Dorsolateral prefrontal cortex (tissue), 120 donors: ENCODE measurements at regions of chr19 and their contacts with region 1.

Region 1: GRCh38 chr19:38729653-38730469 is 14.4 kb downstream of the CAPN12 start:
- DNase-seq: peak in 4 of 10 donors; percentile 45 to 66 (median 56)
- H3K4me3 ChIP-seq: no peak overlapping the region
- H3K27ac ChIP-seq: peak overlapping the region in 48 of 59 donors; percentile 9 to 81 (median 59)
- H3K27me3 ChIP-seq: no peaks in the 10 kb centered on the region
- CTCF ChIP-seq: peak; percentile 20 to 80 (median 69)

Region 2: DNA sequence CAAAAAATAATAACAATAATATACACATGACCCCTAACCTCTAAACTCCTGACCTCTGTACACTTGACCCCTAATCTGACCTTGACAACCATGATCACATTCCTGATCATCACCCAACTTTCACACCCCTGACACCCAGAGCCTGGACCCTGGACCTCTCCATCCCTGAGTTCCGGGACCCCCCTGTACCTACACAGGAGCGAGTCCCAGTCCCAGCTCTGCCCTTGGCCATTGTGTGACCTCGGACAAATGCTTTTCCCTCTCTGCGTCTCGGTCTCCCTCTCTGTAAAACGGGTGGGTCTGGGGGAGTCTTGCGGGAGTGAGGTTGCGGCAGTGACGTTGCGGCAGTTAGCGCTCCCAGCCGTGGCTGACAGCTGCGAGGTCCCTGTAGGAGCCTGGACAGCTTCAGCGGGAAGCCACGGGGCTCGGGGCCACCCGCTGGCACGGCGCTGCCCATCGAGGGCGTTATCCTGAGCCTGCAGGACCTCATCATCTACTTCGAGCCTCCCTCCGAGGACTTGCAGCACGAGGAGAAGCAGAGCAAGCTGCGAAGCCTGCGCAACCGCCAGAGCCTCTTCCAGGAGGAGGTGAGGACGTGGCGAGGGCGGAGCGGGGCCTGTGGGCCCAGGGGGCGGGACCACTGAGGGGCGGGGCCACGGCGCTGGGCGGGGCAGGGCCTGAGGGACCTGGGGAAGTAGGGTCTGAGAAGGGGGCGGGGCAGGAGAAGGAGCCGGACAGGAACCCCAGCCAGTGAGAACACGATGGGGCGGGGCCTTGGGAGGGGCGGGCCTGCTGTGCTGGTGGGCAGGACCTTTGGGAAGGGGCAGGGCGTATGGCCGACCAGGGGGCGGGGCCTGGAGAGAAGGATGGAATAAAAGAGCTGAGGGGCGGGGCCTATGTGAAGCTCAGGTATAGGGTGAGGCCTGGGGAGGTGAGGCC is 277.2 kb before region 1 on chr19:
- intact Hi-C with region 1: no loop called
- DNase-seq: no peak
- H3K4me3 ChIP-seq: no peak overlapping the region
- H3K27ac ChIP-seq: no peak overlapping the region
- H3K27me3 ChIP-seq: no peaks in the 10 kb centered on the region
- CTCF ChIP-seq: no peak

Region 3: DNA sequence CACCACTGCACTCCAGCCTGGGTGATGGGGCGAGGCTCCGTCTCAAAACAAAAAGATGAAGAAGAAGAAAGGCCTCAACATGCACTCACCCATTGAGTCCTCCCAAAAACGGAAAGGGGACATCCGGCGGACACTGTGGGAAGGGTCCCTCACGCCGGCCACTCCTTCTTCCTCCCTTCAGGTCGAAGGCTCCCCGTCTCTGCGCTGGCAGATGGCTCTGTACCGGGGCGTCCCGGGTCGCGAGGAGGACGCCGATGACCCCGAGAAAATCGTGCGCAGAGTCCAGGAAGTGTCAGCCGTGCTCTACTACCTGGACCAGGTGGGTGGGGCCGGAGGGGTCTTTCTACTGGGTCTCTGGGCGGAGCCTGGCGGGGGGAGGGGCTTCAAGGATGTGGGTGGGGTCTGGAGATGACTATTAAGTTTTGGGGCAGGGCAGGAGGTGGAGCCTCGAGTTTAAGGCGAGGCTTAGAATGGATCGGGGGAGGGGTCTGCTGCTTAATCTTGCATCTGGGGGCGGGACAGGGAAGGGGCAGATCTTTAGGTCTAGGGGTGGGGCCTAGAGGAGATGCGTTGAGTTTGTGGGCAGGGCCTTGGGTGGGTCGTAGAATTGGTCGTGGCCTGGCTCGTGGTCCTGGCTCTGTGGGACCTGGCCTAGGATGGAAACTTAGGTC is 202.3 kb before region 1 on chr19:
- intact Hi-C with region 1: no loop called
- DNase-seq: no peak
- H3K4me3 ChIP-seq: no peak overlapping the region
- H3K27ac ChIP-seq: no peak overlapping the region
- H3K27me3 ChIP-seq: no peaks in the 10 kb centered on the region
- CTCF ChIP-seq: no peak

Region 4: DNA sequence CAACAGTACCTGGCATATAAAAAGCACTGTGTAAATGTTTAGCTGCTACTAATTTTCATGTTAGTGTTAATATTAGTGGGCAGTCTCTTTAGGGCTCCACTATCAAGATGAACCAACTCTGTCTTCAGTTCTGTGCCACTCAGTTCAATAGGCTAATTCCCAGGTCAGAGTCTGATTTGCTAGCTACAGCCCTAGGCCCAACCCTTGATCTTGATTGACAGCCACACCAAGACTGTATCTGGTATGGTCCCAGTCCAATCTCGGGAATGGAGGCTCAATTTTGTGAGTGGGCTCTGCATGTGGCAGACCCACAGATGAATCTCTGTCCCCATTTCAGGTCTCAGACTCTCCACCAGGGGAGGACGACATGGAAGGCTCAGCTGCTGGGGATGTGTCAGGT is 158.2 kb before region 1 on chr19:
- intact Hi-C with region 1: no loop called
- DNase-seq: no peak
- H3K4me3 ChIP-seq: no peak overlapping the region
- H3K27ac ChIP-seq: no peak overlapping the region
- H3K27me3 ChIP-seq: no peaks in the 10 kb centered on the region
- CTCF ChIP-seq: no peak

Region 5: DNA sequence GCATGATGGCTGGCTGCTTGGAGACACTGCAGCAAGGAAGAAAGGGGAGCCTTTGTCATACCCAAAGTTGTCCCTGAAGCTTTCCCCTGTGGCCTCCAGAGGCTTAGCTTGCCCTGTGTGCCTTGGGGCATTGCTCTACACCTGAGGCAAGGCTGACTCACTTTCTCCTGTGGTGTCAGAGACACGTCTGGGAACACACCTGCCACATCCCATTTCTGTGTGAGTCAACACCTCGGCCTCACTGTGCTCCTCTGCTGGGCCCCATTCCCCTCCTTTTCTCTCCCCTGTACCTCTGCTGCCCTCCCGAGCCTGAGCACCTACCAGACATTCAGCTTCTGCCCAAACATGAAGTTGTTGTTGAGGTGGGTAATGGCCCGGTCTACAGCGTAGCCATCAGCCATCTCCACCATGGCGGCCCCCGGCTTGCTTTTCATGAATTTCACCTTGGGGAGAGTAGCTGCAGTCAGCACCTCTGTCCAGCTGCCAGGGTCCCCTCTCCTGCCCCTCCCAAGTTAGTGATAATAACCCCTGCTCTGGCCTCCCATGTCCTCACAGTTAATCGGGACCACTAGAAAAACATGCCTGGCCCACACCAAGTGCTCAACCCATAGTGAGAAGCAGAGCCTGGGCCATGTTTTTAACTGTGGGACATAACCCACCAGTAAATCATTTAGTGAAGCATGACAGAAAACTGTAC is 108.9 kb after region 1 on chr19:
- intact Hi-C with region 1: loop called (anchors 5 kb)
- DNase-seq: no peak
- H3K4me3 ChIP-seq: no peak overlapping the region
- H3K27ac ChIP-seq: peak overlapping the region in 3 of 59 donors; percentile 11 to 31 (median 13)
- H3K27me3 ChIP-seq: no peaks in the 10 kb centered on the region
- CTCF ChIP-seq: no peak

Region 6: DNA sequence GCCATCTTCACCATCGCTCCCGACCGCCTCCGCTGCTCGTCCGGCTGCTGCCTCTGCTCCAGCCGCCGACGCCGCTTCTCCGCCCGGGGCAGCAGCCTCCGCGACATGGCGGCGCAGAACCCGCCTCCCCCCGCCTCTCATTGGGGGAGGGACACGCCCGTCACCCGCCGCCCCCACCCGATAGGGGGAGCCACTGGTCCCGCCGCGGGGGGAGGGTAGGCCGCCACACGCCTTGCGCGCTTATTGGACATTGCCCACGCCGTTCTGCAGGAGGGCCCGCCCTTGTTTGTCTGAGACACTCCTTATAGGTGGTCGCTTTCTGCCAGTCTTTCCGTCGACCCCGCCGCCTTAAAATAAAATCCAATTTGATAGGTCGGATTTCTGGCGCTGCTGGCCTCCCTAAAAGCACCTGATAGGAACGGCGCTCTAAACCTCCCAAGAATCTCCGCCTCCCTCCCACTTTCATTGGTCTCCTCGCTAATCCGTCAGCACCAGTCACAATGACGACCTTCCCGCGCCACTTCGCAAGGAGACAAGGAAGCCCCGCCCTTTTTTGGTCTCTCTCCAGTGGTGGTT is 120.1 kb after region 1 on chr19 and contains the start of gene HNRNPL:
- intact Hi-C with region 1: loop called in 1 of 2 experiments (anchors 5 kb)
- DNase-seq: peak in 8 of 10 donors; percentile 98 to 100 (median 100)
- H3K4me3 ChIP-seq: peak within 1 kb of the TSS; percentile 65 to 100 (median 92)
- H3K27ac ChIP-seq: peak within 1 kb of the TSS; percentile 97 to 100 (median 100)
- H3K27me3 ChIP-seq: no peaks in the 10 kb centered on the region
- CTCF ChIP-seq: peak in 54 of 56 donors; percentile 27 to 73 (median 50)
- total RNA-seq, gene HNRNPL: 179 to 311 (median 224) TPM